CD14-positive monocyte (primary cell): ENCODE measurements at regions of chr10 and their contacts with region 1.

Region 1: GRCh38 chr10:103481974-103482531 is 3.0 kb upstream of the CALHM3 start:
- DNase-seq: peak; percentile 65 to 82 (median 76)
- H3K4me3 ChIP-seq: no peak overlapping the region
- H3K4me3 Mint-ChIP-seq: no peak overlapping the region
- H3K27ac ChIP-seq: no peak overlapping the region
- H3K27ac Mint-ChIP-seq: no peak overlapping the region
- H3K4me1 ChIP-seq: peaks cover 6 to 11% of the 10 kb centered on the region in 2 donors
- H3K4me1 Mint-ChIP-seq: peaks cover 11% of the 10 kb centered on the region
- H3K27me3 ChIP-seq: no peaks in the 10 kb centered on the region
- H3K27me3 Mint-ChIP-seq: peaks cover 0 to 3% (median 2%) of the 10 kb centered on the region in 3 donors
- CTCF ChIP-seq: peak; percentile 81

Region 2: GRCh38 chr10:103416436-103417147 is 65.5 kb before region 1 on chr10:
- intact Hi-C with region 1: loop called (anchors 1 kb)
- DNase-seq: peak; percentile 38 to 66 (median 57)
- H3K4me3 ChIP-seq: no peak overlapping the region
- H3K4me3 Mint-ChIP-seq: no peak overlapping the region
- H3K27ac ChIP-seq: no peak overlapping the region
- H3K27ac Mint-ChIP-seq: no peak overlapping the region
- H3K4me1 ChIP-seq: no peaks in the 10 kb centered on the region
- H3K4me1 Mint-ChIP-seq: no peaks in the 10 kb centered on the region
- H3K27me3 ChIP-seq: no peaks in the 10 kb centered on the region
- H3K27me3 Mint-ChIP-seq: no peaks in the 10 kb centered on the region
- CTCF ChIP-seq: peak; percentile 81

Region 3: DNA sequence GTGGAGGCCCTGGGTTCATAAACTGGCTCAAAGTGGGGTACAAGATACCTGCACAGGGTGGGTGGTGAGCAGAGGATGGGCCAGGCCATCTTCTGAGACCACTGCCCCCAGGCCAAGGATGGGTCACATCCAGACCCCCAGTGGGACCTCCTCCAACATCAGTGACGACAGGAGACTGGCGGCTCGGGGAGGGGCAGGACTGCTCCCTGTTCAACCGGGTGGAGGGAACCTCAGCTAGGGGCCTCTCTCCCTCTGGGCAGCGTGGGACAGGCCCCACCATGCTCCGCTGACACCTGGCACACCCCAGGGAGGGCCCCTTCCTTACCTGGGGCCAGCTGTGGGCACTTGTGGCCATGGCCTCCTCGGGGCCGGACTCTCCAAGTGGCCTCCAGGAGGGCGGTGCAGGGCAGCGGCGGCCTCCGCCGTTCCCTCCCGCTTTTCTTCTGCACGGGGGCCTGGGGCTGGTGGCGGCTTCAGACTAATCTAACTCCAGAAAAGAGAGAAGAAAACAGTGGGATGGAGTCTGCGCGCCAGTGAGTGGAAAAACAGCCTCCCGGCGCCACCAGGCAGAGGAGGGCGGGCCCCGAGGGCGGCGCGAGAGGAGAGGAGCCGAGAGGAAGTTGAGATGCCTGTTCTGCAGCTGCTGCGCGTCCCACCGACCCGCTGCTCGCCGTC is 30.1 kb before region 1 on chr10 and contains the start of gene CALHM2:
- intact Hi-C with region 1: loop called in 1 of 2 experiments (anchors 5 kb)
- DNase-seq: peak; percentile 51 to 52 (median 51)
- H3K4me3 ChIP-seq: peak within 1 kb of the TSS; percentile 73 to 96 (median 94)
- H3K4me3 Mint-ChIP-seq: peak within 1 kb of the TSS; percentile 93 to 98
- H3K27ac ChIP-seq: peak within 1 kb of the TSS; percentile 48 to 77
- H3K27ac Mint-ChIP-seq: peak within 1 kb of the TSS; percentile 53 to 93 (median 85)
- H3K4me1 ChIP-seq: peaks cover 43 to 64% of the 10 kb centered on the region in 2 donors
- H3K4me1 Mint-ChIP-seq: peaks cover 62% of the 10 kb centered on the region
- H3K27me3 ChIP-seq: no peaks in the 10 kb centered on the region
- H3K27me3 Mint-ChIP-seq: peaks cover 1 to 7% (median 6%) of the 10 kb centered on the region in 3 donors
- CTCF ChIP-seq: no peak
- polyA plus RNA-seq, gene CALHM2: 48.4 to 80.7 (median 66.5) TPM